Activated CD8-positive, alpha-beta memory T cell treated with anti-CD3 and anti-CD28 coated beads, Interleukin-2, amount 10 ng/mL, durations not matched to agents 7 days and 5 days (primary cell): ENCODE measurements at regions of chr1 and their contacts with region 1.

Region 1: GRCh38 chr1:112674439-112674985 is at the start of gene MOV10:
- DNase-seq: peak; percentile 80
- ATAC-seq: peak; percentile 84
- H3K4me3 Mint-ChIP-seq: peak within 1 kb of the TSS; percentile 95
- H3K27ac Mint-ChIP-seq: peak within 1 kb of the TSS; percentile 97
- H3K4me1 Mint-ChIP-seq: peaks cover 49% of the 10 kb centered on the region
- H3K27me3 Mint-ChIP-seq: no peaks in the 10 kb centered on the region
- total RNA-seq, gene MOV10: 112 to 171 TPM

Region 2: GRCh38 chr1:112619520-112620376 is 54.8 kb before region 1 on chr1 and contains the start of gene CAPZA1:
- CTCF ChIA-PET with region 1: interaction called, 14 read pairs
- DNase-seq: peak; percentile 96
- ATAC-seq: peak; percentile 83
- H3K4me3 Mint-ChIP-seq: peak within 1 kb of the TSS; percentile 99
- H3K27ac Mint-ChIP-seq: peak within 1 kb of the TSS; percentile 99
- H3K4me1 Mint-ChIP-seq: peaks cover 31% of the 10 kb centered on the region
- H3K27me3 Mint-ChIP-seq: no peaks in the 10 kb centered on the region
- total RNA-seq, gene CAPZA1: 293 to 301 TPM

Region 3: GRCh38 chr1:112651205-112651604 is 23.3 kb before region 1 on chr1:
- CTCF ChIA-PET with region 1: interaction called, 25 read pairs
- DNase-seq: no peak
- ATAC-seq: peak; percentile 45
- H3K4me3 Mint-ChIP-seq: no peak overlapping the region
- H3K27ac Mint-ChIP-seq: no peak overlapping the region
- H3K4me1 Mint-ChIP-seq: peaks cover 19% of the 10 kb centered on the region
- H3K27me3 Mint-ChIP-seq: no peaks in the 10 kb centered on the region

Region 4: GRCh38 chr1:112706908-112707663 is 32.6 kb after region 1 on chr1 and contains the start of gene RHOC:
- CTCF ChIA-PET with region 1: interaction called, 14 read pairs
- DNase-seq: peak; percentile 80
- ATAC-seq: peak; percentile 76
- H3K4me3 Mint-ChIP-seq: peak within 1 kb of the TSS; percentile 75
- H3K27ac Mint-ChIP-seq: peak within 1 kb of the TSS; percentile 89
- H3K4me1 Mint-ChIP-seq: peaks cover 44% of the 10 kb centered on the region
- H3K27me3 Mint-ChIP-seq: peaks cover 30% of the 10 kb centered on the region
- total RNA-seq, gene RHOC: 105 to 130 TPM